Activated CD8-positive, alpha-beta T cell treated with anti-CD3 and anti-CD28 coated beads, Interleukin-2, amount 10 ng/mL, durations not matched to agents 7 days and 5 days (primary cell): ENCODE measurements at regions of chr17 and their contacts with region 1.

Region 1: GRCh38 chr17:81025741-81026129 is 9.2 kb upstream of the BAIAP2 start:
- DNase-seq: no peak
- ATAC-seq: no peak
- H3K4me3 Mint-ChIP-seq: no peak overlapping the region
- H3K27ac Mint-ChIP-seq: no peak overlapping the region
- H3K4me1 Mint-ChIP-seq: peaks cover 16% of the 10 kb centered on the region
- H3K27me3 Mint-ChIP-seq: peaks cover 12% of the 10 kb centered on the region

Region 2: GRCh38 chr17:81094509-81095382 is 69.0 kb after region 1 on chr17:
- CTCF ChIA-PET with region 1: interaction called, 29 read pairs
- POLR2A ChIA-PET with region 1: interaction called, 3 read pairs
- DNase-seq: peak; percentile 95
- ATAC-seq: peak; percentile 91
- H3K4me3 Mint-ChIP-seq: peak overlapping the region; percentile 58
- H3K27ac Mint-ChIP-seq: peak overlapping the region; percentile 88
- H3K4me1 Mint-ChIP-seq: peaks cover 43% of the 10 kb centered on the region
- H3K27me3 Mint-ChIP-seq: peaks cover 2% of the 10 kb centered on the region

Region 3: GRCh38 chr17:81101614-81102306 is 76.0 kb after region 1 on chr17:
- CTCF ChIA-PET with region 1: interaction called, 29 read pairs
- POLR2A ChIA-PET with region 1: no interaction called
- DNase-seq: peak; percentile 91
- ATAC-seq: peak; percentile 97
- H3K4me3 Mint-ChIP-seq: no peak overlapping the region
- H3K27ac Mint-ChIP-seq: no peak overlapping the region
- H3K4me1 Mint-ChIP-seq: peaks cover 6% of the 10 kb centered on the region
- H3K27me3 Mint-ChIP-seq: no peaks in the 10 kb centered on the region